HepG2 (cell line): ENCODE measurements at regions of chr18 and their contacts with region 1.

Region 1: DNA sequence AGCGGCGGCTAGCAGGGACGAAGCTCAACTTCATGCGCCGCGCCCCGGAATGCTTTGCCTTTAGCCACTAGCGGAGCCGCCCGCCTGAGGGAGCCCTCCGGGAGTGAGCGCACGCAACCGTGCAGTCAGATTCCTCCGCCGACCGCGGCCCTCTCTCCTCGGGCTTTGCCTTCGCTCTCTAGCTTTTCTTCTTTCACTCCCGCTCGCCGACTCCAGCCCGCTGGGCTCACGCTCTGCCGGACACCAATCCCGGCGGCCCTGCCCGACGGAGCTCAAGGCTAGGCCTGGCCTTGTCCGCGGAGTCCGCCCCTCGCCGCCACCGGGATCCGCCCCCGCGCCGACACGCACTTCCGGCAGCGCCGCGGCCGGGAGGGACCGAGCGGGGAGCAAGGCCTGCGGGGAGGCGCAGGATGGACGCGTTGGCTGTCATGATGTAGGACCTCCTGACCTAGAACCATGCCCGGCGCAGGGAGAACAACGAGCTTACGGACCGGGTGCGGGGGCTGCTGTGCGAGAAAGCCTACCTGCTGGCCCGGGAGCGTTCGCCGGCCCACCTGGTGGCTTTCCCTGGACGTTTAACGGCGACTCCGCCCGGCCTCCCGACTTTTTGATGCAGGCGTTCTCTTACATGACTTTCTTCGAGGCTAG is 40.8 kb upstream of the AKAIN1 start:
- DNase-seq: peak; percentile 82
- ATAC-seq: peak; percentile 94
- H3K4me3 ChIP-seq: peak overlapping the region; percentile 76 to 95 (median 79)
- H3K27ac ChIP-seq: peak overlapping the region; percentile 99
- H3K4me1 ChIP-seq: peaks cover 31% of the 10 kb centered on the region
- H3K27me3 ChIP-seq: no peaks in the 10 kb centered on the region
- CTCF ChIP-seq: 0 out of 2 replicates have a peak, but pooled peaks have one; percentile 13
- EP300 ChIP-seq: no peak
- POLR2A ChIP-seq: peak; percentile 61 to 85
- RAD21 ChIP-seq: no peak; the same call in 1 of the 2 replicates

Region 2: GRCh38 chr18:4931209-4931608 is 306.6 kb before region 1 on chr18:
- CTCF ChIA-PET with region 1: no interaction called
- POLR2A ChIA-PET with region 1: no interaction called
- in situ Hi-C with region 1: no loop called
- intact Hi-C with region 1: no loop called
- DNase-seq: no peak
- ATAC-seq: no peak
- H3K4me3 ChIP-seq: no peak overlapping the region
- H3K27ac ChIP-seq: no peak overlapping the region
- H3K4me1 ChIP-seq: no peaks in the 10 kb centered on the region
- H3K27me3 ChIP-seq: no peaks in the 10 kb centered on the region
- CTCF ChIP-seq: no peak
- EP300 ChIP-seq: no peak
- POLR2A ChIP-seq: no peak
- RAD21 ChIP-seq: no peak

Region 3: DNA sequence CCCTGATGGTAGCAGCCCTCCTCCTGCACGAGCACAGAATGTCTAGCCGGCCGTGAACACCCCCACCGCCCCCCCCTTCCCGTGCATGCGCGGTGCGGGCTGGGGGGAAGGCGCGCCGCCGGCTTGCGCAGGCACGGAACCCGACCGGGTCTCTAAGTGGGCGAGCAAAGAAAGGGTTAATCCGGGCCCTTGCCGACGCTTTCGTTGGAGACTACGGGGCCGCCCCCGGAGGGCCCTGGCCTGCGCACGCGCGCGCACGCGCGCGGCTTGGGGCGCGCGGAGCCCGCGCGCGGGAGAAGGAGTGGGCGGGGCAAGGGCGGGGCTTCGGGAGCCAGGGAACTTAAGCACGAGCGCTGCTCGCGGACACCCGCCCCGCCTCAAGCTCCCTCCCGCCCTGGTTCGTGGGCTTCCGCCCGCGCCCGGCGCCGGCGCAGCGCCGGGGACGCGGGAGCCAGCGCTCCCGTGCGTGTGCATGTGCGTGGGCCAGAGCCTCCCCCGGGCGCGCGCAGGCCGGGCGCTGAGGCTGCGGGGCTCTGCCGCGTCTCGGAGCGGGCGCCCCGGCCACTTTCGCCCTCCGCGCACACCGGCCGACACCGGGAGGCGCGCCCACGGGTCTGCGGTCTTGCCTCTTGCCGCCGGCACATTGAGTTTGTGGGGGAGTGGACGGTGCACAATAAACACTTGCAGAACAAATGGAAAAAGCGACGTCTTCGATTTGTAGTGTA is 58.3 kb after region 1 on chr18:
- CTCF ChIA-PET with region 1: no interaction called
- POLR2A ChIA-PET with region 1: interaction called, 82 read pairs
- in situ Hi-C with region 1: loop called (anchors 5 kb)
- intact Hi-C with region 1: loop called (anchors 1 kb)
- DNase-seq: peak; percentile 90
- ATAC-seq: peak; percentile 44
- H3K4me3 ChIP-seq: peak overlapping the region; percentile 67 to 79 (median 74); a peak in 5 of 6 replicates
- H3K27ac ChIP-seq: peak overlapping the region; percentile 96
- H3K4me1 ChIP-seq: peaks cover 51% of the 10 kb centered on the region
- H3K27me3 ChIP-seq: no peaks in the 10 kb centered on the region; a peak in 1 of 5 replicates
- CTCF ChIP-seq: no peak
- EP300 ChIP-seq: peak in 1 of 2 experiments; percentile 15; a peak in 1 of 4 replicates
- POLR2A ChIP-seq: peak in 1 of 2 experiments; percentile 67; a peak in 3 of 4 replicates
- RAD21 ChIP-seq: peak; percentile 48; the same call in 1 of the 2 replicates

Region 4: GRCh38 chr18:5302606-5303005 is 64.8 kb after region 1 on chr18:
- CTCF ChIA-PET with region 1: no interaction called
- POLR2A ChIA-PET with region 1: interaction called, 14 read pairs
- in situ Hi-C with region 1: no loop called
- intact Hi-C with region 1: loop called (anchors 1 kb)
- DNase-seq: no peak
- ATAC-seq: no peak
- H3K4me3 ChIP-seq: no peak overlapping the region
- H3K27ac ChIP-seq: no peak overlapping the region
- H3K4me1 ChIP-seq: peaks cover 63% of the 10 kb centered on the region
- H3K27me3 ChIP-seq: no peaks in the 10 kb centered on the region
- CTCF ChIP-seq: no peak
- EP300 ChIP-seq: no peak
- POLR2A ChIP-seq: no peak
- RAD21 ChIP-seq: no peak

Region 5: DNA sequence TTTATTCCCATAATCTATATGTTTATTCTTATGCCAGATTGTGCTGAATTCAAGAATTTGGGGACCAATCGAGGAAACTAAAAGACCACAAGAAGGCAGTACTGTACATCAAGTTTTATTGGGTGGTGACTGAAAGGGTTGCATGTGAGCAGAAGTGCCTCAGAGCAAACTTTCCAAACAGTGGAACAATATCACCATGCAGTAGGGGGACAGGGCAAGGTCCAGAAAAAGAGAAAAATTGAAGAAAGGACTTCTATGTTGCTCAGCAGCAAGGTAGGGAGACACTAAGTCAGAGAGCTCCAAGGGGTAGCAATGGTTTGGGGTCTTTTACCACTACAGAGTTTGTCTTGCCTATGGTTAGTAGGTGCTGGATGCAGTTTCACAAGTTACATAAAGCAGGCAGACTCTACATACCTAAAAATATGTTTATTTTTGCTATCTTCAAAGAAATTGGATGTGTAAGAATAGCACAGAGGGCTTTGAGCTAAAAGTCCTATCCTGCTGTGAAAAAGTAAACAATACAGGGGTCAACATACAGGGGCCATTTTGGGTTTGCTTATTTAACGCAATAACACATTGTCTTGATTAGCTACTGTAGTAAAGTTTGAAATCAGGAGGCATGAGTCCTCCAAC is 101.5 kb after region 1 on chr18:
- CTCF ChIA-PET with region 1: no interaction called
- POLR2A ChIA-PET with region 1: interaction called, 11 read pairs
- in situ Hi-C with region 1: no loop called
- intact Hi-C with region 1: loop called (anchors 1 kb)
- DNase-seq: peak; percentile 87
- ATAC-seq: peak; percentile 97
- H3K4me3 ChIP-seq: peak overlapping the region in 2 of 3 experiments; percentile 38 to 49; a peak in 2 of 6 replicates
- H3K27ac ChIP-seq: peak overlapping the region; percentile 92
- H3K4me1 ChIP-seq: peaks cover 42% of the 10 kb centered on the region
- H3K27me3 ChIP-seq: no peaks in the 10 kb centered on the region
- CTCF ChIP-seq: peak; percentile 44
- EP300 ChIP-seq: peak; percentile 16 to 87; a peak in 3 of 4 replicates
- POLR2A ChIP-seq: peak in 1 of 2 experiments; percentile 52; a peak in 1 of 4 replicates
- RAD21 ChIP-seq: peak; percentile 10; the same call in 1 of the 2 replicates

Region 6: DNA sequence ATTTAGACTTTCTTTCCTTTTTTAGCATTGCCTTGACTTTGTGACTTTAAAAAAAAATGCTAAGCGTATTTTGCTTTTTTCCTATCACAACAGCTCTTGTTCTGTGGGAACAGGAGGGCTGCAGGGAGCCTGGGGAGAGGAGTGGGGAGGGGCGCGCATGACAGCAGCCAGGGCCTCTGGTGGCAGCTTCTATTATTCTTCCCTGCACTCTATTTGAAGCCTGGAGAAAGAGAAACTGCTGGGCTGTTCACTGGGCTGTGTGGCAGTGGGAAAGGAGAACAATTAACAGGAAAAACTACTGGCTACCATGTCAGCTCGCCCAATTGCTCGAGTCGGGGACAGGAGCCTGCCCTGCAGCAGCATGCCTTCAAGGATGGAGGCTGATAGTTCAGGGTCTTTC is 176.7 kb after region 1 on chr18:
- CTCF ChIA-PET with region 1: no interaction called
- POLR2A ChIA-PET with region 1: no interaction called
- in situ Hi-C with region 1: no loop called
- intact Hi-C with region 1: loop called (anchors 5 kb)
- DNase-seq: no peak
- ATAC-seq: peak; percentile 74
- H3K4me3 ChIP-seq: no peak overlapping the region
- H3K27ac ChIP-seq: no peak overlapping the region
- H3K4me1 ChIP-seq: no peaks in the 10 kb centered on the region
- H3K27me3 ChIP-seq: peaks cover 0 to 18% of the 10 kb centered on the region in 2 experiments; a peak in 2 of 5 replicates
- CTCF ChIP-seq: no peak
- EP300 ChIP-seq: no peak
- POLR2A ChIP-seq: no peak
- RAD21 ChIP-seq: no peak